ENCODE measurements at regions of chr2 and their contacts with region 1.

Region 1: DNA sequence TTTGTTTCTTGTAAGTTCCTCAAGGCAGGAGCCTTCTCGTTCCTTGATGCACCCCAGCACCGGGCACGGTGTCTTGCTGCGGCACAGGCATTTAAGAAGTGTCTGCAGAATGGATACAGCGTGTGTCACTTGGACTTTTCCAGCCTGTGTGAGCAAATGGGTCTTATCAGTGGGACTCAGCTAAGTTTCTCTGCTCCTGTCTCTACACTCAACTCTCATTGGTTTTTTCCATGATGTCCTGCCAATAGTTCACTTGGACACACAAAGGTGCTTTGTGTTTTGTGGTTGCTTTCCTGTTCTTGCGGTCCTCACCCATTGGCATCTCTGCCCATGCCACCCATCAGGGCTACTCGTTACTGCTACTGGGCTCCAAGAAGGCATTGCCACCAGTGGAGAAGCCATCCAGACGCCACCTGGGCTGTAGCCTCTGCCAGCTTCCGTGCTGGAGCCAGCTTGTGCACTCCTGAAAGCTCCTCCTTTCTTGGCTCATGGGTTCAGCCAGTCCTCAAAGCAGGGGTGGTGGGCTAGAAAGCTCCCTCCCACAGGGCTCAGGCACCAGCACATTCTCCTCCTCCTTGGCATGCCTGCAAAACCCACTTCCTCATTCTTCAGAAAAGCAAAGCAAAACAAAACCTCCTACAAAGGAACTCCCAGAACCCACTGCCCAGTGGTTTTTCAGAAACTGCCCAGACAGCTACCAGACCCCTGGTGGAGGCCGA is 41.4 kb downstream of the IL1R2 start:
- DNase-seq: peak; percentile 53
- ATAC-seq: peak; percentile 94
- H3K4me3 ChIP-seq: no peak overlapping the region
- H3K27ac ChIP-seq: no peak overlapping the region
- H3K4me1 ChIP-seq: peaks cover 5% of the 10 kb centered on the region
- H3K27me3 ChIP-seq: no peaks in the 10 kb centered on the region
- CTCF ChIP-seq: no peak
- EP300 ChIP-seq: peak in 1 of 2 experiments; percentile 29; a peak in 1 of 4 replicates
- POLR2A ChIP-seq: no peak
- RAD21 ChIP-seq: no peak

Region 2: GRCh38 chr2:101983928-101984327 is 49.3 kb before region 1 on chr2:
- CTCF ChIA-PET with region 1: no interaction called
- POLR2A ChIA-PET with region 1: no interaction called
- RAD21 ChIA-PET with region 1: no interaction called
- SMC1A ChIA-PET with region 1: no interaction called
- in situ Hi-C with region 1: no loop called
- intact Hi-C with region 1: no loop called
- DNase-seq: no peak
- ATAC-seq: peak; percentile 28; the same call in 1 of the 3 replicates
- H3K4me3 ChIP-seq: no peak overlapping the region
- H3K27ac ChIP-seq: no peak overlapping the region
- H3K4me1 ChIP-seq: no peaks in the 10 kb centered on the region
- H3K27me3 ChIP-seq: no peaks in the 10 kb centered on the region
- CTCF ChIP-seq: peak in 2 of 3 experiments; percentile 13 to 32; a peak in 4 of 6 replicates
- EP300 ChIP-seq: no peak
- POLR2A ChIP-seq: no peak
- RAD21 ChIP-seq: peak; percentile 25; the same call in 1 of the 2 replicates

Region 3: GRCh38 chr2:102050854-102051391 is 17.7 kb after region 1 on chr2:
- CTCF ChIA-PET with region 1: interaction called, 11 read pairs
- POLR2A ChIA-PET with region 1: interaction called, 9 read pairs
- RAD21 ChIA-PET with region 1: interaction called, 77 read pairs
- SMC1A ChIA-PET with region 1: interaction called, 68 read pairs
- in situ Hi-C with region 1: no loop called
- intact Hi-C with region 1: no loop called
- DNase-seq: no peak
- ATAC-seq: peak; percentile 42; the same call in 2 of the 3 replicates
- H3K4me3 ChIP-seq: no peak overlapping the region
- H3K27ac ChIP-seq: no peak overlapping the region
- H3K4me1 ChIP-seq: no peaks in the 10 kb centered on the region
- H3K27me3 ChIP-seq: no peaks in the 10 kb centered on the region
- CTCF ChIP-seq: no peak
- EP300 ChIP-seq: no peak
- POLR2A ChIP-seq: no peak
- RAD21 ChIP-seq: no peak

Measured in GM12878 (cell line).